GM10248 (cell line): ENCODE measurements at regions of chr6 and their contacts with region 1.

Region 1: DNA sequence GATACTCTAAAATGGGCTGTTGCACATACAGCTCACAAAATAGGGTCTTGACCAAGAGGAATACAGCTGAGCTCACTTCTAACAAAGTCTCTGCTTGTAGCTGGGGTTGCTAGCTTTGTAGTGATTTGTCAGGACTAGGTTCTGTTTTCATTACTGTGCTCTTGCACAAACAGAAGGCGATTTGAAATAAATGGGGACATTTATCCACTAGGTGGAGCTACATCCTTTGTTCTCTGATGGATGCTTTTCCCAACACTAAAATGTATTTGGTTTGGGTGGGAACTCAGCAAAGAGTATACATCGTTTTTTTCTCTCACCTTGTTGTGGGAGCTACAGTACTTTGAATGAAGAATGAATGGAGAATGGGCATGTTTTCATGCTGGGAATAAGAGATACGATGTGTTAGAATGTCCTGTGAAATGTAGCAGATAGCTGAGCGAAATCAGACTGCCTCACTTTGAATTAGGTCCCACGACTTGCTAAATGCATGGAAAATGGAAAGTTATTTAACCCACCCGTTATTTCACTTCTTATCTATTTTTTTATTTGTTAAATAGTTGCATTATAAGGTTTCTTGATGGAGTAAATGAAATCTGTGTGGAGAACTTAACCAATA is 494.7 kb upstream of the MAP3K7 start:
- DNase-seq: peak; percentile 44
- CTCF ChIP-seq: peak; percentile 72

Region 2: GRCh38 chr6:91094806-91095475 is 13.4 kb after region 1 on chr6:
- CTCF ChIA-PET with region 1: interaction called, 14 read pairs
- POLR2A ChIA-PET with region 1: no interaction called
- DNase-seq: no peak
- CTCF ChIP-seq: no peak

Region 3: GRCh38 chr6:91106083-91106482 is 24.5 kb after region 1 on chr6:
- CTCF ChIA-PET with region 1: interaction called, 15 read pairs
- POLR2A ChIA-PET with region 1: no interaction called
- DNase-seq: no peak
- CTCF ChIP-seq: no peak